Naive thymus-derived CD4-positive, alpha-beta T cell (primary cell): ENCODE measurements at regions of chr19 and their contacts with region 1.

Region 1: GRCh38 chr19:14517840-14518505 is at the start of gene DNAJB1:
- DNase-seq: peak in 2 of 9 donors; percentile 53 to 86
- ATAC-seq: peak; percentile 33
- H3K4me3 ChIP-seq: peak within 1 kb of the TSS; percentile 73
- H3K4me3 Mint-ChIP-seq: peak within 1 kb of the TSS; percentile 93 to 99 (median 96)
- H3K27ac ChIP-seq: peak within 1 kb of the TSS; percentile 97
- H3K27ac Mint-ChIP-seq: peak within 1 kb of the TSS; percentile 92 to 100 (median 98)
- H3K4me1 ChIP-seq: peaks cover 57 to 64% of the 10 kb centered on the region in 2 donors
- H3K4me1 Mint-ChIP-seq: peaks cover 42 to 80% (median 72%) of the 10 kb centered on the region in 7 donors
- H3K27me3 ChIP-seq: no peaks in the 10 kb centered on the region
- H3K27me3 Mint-ChIP-seq: peaks cover 0 to 2% (median 0%) of the 10 kb centered on the region in 5 donors
- total RNA-seq, gene DNAJB1: 87.4 to 574 (median 177) TPM

Region 2: DNA sequence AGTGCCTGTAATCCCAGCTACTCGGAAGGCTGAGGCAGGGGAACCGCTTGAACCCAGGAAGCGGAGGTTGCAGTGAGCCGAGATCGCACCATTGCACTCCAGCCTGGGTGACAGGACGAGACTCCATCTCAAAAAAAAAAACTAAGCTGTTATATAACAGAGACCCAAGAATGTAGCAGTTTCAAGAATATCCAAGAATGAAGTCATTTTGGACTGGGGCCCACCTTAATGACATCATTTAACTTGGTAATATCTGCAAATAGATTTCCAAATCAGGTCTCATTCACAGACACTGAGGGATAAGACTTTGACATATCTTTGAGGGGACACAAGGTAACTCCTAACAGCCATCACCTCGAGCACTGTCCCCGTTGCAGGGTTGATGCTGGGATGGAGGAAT is 790.2 kb before region 1 on chr19:
- CTCF ChIA-PET with region 1: no interaction called
- POLR2A ChIA-PET with region 1: no interaction called
- intact Hi-C with region 1: no loop called
- DNase-seq: no peak
- ATAC-seq: no peak
- H3K4me3 ChIP-seq: no peak overlapping the region
- H3K4me3 Mint-ChIP-seq: no peak overlapping the region
- H3K27ac ChIP-seq: no peak overlapping the region
- H3K27ac Mint-ChIP-seq: peak overlapping the region in 1 of 9 donors; percentile 19
- H3K4me1 ChIP-seq: peaks cover 3 to 7% of the 10 kb centered on the region in 2 donors
- H3K4me1 Mint-ChIP-seq: peaks cover 6 to 19% (median 11%) of the 10 kb centered on the region in 7 donors
- H3K27me3 ChIP-seq: no peaks in the 10 kb centered on the region
- H3K27me3 Mint-ChIP-seq: peaks cover 0 to 4% (median 0%) of the 10 kb centered on the region in 5 donors

Region 3: DNA sequence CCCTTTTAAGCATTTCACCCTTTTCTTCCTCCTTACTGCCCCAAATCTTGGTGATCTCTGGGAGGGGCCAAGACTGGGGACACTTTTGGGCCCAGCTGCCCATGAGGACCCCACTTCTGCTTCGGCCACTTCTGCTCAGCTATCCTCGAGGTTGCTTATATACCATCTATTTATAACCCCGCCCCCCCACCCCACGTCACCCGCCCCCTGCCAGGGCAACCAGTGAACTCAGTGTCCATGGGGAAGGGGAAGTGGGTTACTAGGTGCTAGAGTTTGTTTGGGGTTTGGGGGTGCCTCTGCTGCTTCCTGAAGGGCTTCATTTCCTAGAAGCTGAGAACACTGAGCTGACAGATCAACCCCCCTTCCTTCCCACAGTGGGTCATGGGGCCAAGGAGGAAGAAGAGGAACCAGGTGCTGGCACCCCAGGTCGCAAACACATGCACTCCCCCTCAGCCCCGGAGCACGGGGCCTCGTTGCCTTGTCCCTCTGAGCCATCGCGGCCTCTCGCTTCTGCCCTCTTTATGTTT is 142.9 kb before region 1 on chr19:
- CTCF ChIA-PET with region 1: no interaction called
- POLR2A ChIA-PET with region 1: interaction called, 7 read pairs
- intact Hi-C with region 1: loop called in 1 of 2 experiments (anchors 5 kb)
- DNase-seq: peak in 7 of 9 donors; percentile 76 to 94 (median 91)
- ATAC-seq: peak; percentile 92
- H3K4me3 ChIP-seq: peak overlapping the region; percentile 34
- H3K4me3 Mint-ChIP-seq: peak overlapping the region; percentile 61 to 80 (median 71)
- H3K27ac ChIP-seq: peak overlapping the region; percentile 99
- H3K27ac Mint-ChIP-seq: peak overlapping the region; percentile 94 to 99 (median 98)
- H3K4me1 ChIP-seq: peaks cover 57 to 60% of the 10 kb centered on the region in 2 donors
- H3K4me1 Mint-ChIP-seq: peaks cover 22 to 75% (median 61%) of the 10 kb centered on the region in 7 donors
- H3K27me3 ChIP-seq: no peaks in the 10 kb centered on the region
- H3K27me3 Mint-ChIP-seq: no peaks in the 10 kb centered on the region

Region 4: DNA sequence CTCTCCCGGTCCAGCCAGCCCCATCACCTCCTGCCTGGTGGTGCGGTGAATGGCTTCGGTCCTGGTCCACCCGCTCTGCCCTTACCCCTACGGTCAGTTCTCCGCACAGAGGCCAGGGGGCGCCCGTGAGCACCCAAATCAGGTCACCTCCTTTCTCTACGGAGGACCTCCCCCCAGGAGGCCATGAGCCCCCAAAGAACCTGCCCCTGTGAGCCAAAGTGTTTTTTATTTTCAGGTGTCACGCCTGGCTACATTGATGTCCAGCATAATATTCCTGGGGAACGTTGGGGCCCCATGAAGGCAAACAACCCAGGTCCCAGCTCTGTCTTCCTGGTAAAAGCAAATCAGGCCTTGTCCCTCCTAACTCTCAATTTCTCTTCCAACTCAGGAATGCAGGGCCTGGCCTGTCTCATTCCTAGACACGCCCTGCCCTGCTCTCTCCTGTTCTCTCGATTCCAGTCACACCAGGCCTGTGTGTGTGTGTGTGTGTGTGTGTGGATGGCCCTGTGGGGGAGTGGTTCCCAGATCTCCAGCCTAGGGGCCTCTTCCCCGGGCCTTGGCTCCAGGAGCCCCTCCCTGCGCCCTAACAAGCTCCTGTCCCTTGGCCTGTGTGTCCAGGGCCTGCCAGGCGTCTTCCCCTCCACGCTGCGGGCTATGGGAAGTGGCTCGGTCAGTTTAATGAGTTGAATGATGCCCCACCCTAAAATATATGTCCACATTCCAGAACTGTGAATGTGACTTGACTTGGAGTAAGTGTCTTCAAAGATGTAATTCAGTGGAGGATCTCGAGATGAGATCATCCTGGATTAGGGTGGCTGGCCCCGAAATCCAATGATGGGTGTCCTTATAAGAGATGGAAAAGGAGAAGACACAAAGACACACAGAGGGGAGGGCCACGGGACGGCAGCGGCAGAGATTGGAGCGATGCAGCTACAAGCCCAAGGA is 12.2 kb before region 1 on chr19:
- CTCF ChIA-PET with region 1: interaction called, 73 read pairs
- POLR2A ChIA-PET with region 1: interaction called, 1,101 read pairs
- intact Hi-C with region 1: loop called (anchors 1 kb)
- DNase-seq: peak; percentile 62 to 79 (median 71)
- ATAC-seq: peak; percentile 68
- H3K4me3 ChIP-seq: no peak overlapping the region
- H3K4me3 Mint-ChIP-seq: peak overlapping the region; percentile 13 to 84 (median 65)
- H3K27ac ChIP-seq: peak overlapping the region; percentile 70
- H3K27ac Mint-ChIP-seq: peak overlapping the region; percentile 96 to 100 (median 97)
- H3K4me1 ChIP-seq: peaks cover 29 to 50% of the 10 kb centered on the region in 2 donors
- H3K4me1 Mint-ChIP-seq: peaks cover 43 to 78% (median 69%) of the 10 kb centered on the region in 7 donors
- H3K27me3 ChIP-seq: no peaks in the 10 kb centered on the region
- H3K27me3 Mint-ChIP-seq: peaks cover 0 to 7% (median 0%) of the 10 kb centered on the region in 5 donors

Region 5: GRCh38 chr19:14550201-14550784 is 32.3 kb after region 1 on chr19:
- CTCF ChIA-PET with region 1: interaction called, 5 read pairs
- POLR2A ChIA-PET with region 1: interaction called, 1,101 read pairs
- intact Hi-C with region 1: loop called in 1 of 2 experiments (anchors 1 kb)
- DNase-seq: no peak
- ATAC-seq: no peak
- H3K4me3 ChIP-seq: no peak overlapping the region
- H3K4me3 Mint-ChIP-seq: peak overlapping the region in 5 of 10 donors; percentile 8 to 76 (median 36)
- H3K27ac ChIP-seq: no peak overlapping the region
- H3K27ac Mint-ChIP-seq: peak overlapping the region; percentile 64 to 97 (median 84)
- H3K4me1 ChIP-seq: peaks cover 16 to 39% of the 10 kb centered on the region in 2 donors
- H3K4me1 Mint-ChIP-seq: peaks cover 28 to 70% (median 57%) of the 10 kb centered on the region in 7 donors
- H3K27me3 ChIP-seq: no peaks in the 10 kb centered on the region
- H3K27me3 Mint-ChIP-seq: no peaks in the 10 kb centered on the region

Region 6: DNA sequence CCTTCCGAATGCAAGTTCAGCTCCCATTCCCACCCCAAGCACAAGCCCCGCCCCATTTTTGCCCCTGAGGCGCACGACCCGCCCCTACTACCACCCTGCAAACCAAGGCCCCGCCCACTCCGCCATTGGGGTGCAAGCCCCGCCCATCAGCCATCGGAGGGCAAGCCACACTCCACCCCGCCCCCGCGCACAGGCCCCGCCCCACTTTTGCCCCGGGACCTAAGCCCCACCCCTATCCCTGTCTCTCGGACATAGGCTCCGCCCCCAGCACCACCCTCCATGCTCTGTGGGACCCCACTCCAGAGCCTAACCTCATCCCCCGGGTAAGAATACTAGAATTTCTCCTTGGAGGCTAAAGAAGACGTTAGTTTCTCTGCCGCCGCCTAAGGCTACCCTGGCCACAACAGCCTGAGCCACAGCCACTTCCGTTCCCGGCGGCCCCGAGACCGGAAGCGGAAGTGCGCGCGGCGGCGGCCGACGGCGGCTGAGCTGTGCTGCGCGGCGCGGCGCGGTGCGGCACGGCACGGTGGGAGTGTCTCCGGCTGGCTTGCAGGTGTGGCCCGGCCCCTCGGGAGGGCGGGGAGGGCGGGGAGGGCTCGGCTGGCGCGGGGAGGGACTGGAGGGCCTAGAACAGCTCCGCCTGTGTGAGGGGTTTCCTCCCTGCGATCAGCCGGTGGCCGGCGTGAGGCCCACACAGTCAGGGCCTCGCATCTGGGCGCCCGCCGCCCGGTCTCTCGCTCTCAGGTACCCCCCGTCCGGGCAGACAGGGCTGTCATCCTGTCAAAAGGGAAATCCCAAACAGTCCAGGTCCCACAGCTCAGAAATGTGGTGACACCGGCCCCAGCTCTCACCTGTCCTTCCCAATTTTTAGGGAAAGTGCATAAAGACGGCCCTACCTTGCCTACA is 171.9 kb after region 1 on chr19 and contains the start of gene ZNF333:
- CTCF ChIA-PET with region 1: no interaction called
- POLR2A ChIA-PET with region 1: interaction called, 3 read pairs
- intact Hi-C with region 1: loop called in 1 of 2 experiments (anchors 2 kb)
- DNase-seq: peak; percentile 92 to 99 (median 96)
- ATAC-seq: peak; percentile 94
- H3K4me3 ChIP-seq: peak within 1 kb of the TSS; percentile 93
- H3K4me3 Mint-ChIP-seq: peak within 1 kb of the TSS; percentile 81 to 99 (median 94)
- H3K27ac ChIP-seq: peak within 1 kb of the TSS; percentile 97
- H3K27ac Mint-ChIP-seq: peak within 1 kb of the TSS; percentile 93 to 100 (median 99)
- H3K4me1 ChIP-seq: peaks cover 6 to 16% of the 10 kb centered on the region in 2 donors
- H3K4me1 Mint-ChIP-seq: peaks cover 5 to 26% (median 23%) of the 10 kb centered on the region in 7 donors
- H3K27me3 ChIP-seq: no peaks in the 10 kb centered on the region
- H3K27me3 Mint-ChIP-seq: peaks cover 0 to 2% (median 0%) of the 10 kb centered on the region in 5 donors
- total RNA-seq, gene ZNF333: 15.4 to 56.3 (median 34.7) TPM